Cardiac septum (tissue), 1 donor: ENCODE measurements at regions of chr12 and their contacts with region 1.

Region 1: DNA sequence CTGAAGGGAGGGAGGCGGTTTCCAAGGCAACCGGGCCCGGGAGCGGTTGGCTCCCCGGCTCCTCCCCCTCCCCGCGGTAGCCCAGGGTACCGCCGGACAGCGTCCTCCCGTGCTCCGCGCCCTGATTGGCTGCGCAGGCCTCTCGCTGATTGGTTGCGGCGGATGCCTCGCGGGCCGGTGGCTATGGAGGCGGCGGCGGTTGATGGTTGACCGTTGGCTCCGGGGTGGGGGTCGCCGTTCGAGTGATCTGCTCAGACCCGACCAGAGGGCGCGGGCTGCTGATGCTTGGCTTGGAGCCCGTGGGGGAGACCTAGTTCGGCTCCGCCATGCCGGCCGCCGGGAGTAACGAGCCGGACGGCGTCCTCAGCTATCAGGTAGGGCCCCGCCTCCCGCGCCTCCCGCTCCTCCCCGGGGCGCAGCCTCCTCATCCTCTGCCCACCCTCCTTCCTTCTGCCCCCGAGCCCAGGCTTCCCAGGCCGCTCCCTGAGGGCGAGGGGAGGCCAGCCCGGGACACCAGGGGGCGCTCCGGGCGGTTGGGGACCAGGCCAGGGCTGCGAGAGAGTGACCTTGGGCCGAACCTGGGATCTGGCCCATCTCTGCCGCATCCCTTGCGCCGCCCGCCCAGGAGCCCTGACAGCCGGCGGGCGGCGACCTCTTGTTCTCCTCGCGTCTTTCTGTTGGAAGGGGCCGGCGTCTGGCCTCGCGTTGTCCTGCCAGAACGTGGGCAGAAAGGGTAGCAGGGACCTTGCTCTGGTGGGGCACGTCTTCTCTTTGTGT is at the start of gene SLC4A8:
- DNase-seq: peak; percentile 88
- total RNA-seq, gene SLC4A8: 0.86 TPM

Region 2: GRCh38 chr12:51531978-51532497 is 107.2 kb after region 1 on chr12:
- intact Hi-C with region 1: loop called (anchors 1 kb)
- DNase-seq: peak; percentile 79

Region 3: DNA sequence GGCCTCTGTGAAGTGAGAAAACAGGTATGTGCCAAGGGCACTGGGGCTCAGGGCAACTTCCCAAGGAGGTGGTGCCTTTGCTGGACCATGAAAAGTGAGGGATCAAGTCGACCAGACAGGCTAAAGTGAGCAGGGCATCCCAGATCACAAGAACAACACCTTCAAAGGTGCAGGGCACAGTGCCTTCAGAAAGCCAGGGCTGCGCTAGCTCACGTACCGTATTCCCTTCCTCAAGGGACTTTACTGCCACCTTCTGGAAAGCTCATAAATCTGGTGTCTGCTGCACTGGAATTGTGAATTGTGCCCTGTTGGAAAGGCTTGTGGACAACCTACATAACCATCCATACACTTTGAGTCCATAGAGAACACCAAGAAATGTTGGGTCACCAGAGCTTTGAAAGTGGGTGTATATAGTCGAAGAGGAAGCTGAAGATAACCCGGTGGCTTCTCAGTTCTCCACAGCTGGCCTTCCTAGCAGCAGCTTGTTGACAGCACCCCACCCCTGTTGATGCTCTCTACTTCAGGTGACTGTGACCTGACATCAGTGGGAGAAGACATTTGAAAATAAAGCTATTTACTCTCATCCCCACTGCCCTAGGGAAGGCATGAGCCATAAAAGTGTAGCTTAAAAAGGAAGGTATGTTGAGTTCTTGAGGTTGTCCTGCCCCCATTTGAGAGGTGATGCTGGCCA is 399.2 kb after region 1 on chr12:
- intact Hi-C with region 1: loop called (anchors 5 kb)
- DNase-seq: no peak

Region 4: GRCh38 chr12:51868821-51869502 is 444.1 kb after region 1 on chr12:
- intact Hi-C with region 1: loop called (anchors 5 kb)
- DNase-seq: no peak